Activated CD4-positive, alpha-beta T cell treated with anti-CD3 and anti-CD28 coated beads for 36 hours (primary cell): ENCODE measurements at regions of chr12 and their contacts with region 1.

Region 1: DNA sequence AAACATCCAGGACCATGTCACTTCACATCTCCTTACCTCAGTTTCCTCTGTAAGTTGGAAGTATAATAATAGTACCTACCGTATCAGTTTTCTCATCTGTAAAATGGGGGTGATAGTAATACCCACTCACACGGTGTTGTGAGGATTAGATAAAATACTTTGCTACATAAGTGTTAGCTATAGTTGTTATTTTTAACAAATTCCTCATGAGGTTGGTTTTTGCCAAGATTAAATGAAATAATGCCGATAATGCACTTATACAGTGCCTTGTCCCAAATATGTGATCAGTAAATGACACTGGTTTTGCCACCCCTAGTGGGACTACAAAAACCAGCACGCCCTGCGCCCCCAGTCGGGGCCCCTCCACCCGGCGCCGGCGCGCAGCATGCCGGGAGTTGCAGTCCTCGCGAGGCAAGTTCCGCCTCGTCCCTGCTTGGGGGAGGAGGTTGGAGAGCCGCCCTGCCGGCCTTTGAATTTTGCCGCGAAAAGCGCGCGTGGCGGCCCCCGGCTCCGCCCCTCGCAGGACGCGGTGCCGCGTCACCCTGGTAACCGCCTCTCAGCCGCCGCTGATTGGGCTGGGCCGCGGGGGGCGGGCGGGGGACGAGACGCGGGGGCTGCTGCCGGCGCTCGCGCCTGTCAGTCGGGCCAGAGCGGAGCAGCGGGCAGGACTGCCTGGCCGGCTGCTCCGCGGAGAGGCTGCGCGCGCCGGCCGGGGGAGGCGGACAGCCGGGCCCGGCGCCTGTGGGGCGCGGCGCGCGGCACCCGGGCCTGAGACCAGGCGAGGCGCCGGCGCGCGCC is at the start of gene FAM222A:
- DNase-seq: peak; percentile 97
- ATAC-seq: peak; percentile 95
- H3K4me3 Mint-ChIP-seq: peak within 1 kb of the TSS; percentile 56
- H3K27ac Mint-ChIP-seq: no peak within 1 kb of the TSS
- H3K4me1 Mint-ChIP-seq: peaks cover 4% of the 10 kb centered on the region
- H3K27me3 Mint-ChIP-seq: peaks cover 25% of the 10 kb centered on the region
- total RNA-seq, gene FAM222A: 0.39 to 0.53 TPM

Region 2: DNA sequence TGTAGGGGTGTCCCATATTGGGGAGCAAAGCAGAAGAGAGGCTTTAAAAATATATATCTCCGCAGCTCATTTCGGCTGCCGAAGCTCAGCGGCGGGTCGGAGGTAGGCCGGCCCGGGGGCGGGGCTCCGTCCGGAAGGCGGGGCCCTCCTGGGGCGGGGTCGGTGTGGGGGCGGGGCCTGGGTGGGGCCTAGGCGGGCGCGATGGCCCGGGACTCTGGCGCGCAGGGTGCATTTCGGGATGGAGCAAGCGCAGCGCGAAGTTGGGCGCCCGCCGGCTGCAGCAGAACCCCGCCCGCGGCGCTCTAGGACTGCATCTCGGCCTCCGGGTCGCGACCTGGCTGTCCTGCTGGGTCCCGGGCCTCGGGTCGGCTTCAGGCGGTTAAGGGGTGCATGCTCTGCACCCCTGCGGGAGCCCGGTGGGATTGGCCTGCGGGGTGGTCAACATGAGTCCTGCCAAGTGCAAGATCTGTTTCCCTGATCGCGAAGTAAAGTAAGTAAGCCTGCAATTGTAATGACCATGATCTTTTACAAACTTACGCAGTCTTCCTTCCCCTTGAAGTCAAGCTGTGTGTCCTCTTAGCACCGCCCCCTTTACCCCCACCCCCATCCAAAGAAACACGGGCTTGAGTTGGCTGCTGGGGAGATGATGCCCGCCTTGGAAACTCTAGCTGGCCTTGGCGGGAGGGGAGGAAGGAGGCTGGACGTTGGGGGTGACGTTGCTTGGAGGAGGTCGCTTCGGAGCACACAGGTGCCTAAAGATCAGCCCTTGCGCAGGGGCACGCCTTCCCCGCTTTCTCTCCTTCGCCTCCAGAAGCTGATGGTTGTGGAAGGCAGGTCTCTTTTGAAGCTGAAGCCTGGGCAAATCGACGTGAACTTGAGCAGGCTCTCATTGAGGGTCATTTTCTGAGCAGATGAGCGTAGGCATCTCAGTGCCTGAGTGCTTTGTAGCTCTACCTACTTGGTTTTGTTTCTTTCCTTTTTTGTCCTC is 558.6 kb before region 1 on chr12:
- CTCF ChIA-PET with region 1: no interaction called
- POLR2A ChIA-PET with region 1: no interaction called
- intact Hi-C with region 1: loop called in 1 of 2 experiments (anchors 1 kb)
- DNase-seq: peak; percentile 93
- ATAC-seq: peak; percentile 94
- H3K4me3 Mint-ChIP-seq: peak overlapping the region; percentile 82
- H3K27ac Mint-ChIP-seq: peak overlapping the region; percentile 85
- H3K4me1 Mint-ChIP-seq: peaks cover 17% of the 10 kb centered on the region
- H3K27me3 Mint-ChIP-seq: peaks cover 1% of the 10 kb centered on the region

Region 3: GRCh38 chr12:109518820-109519665 is 194.3 kb before region 1 on chr12:
- CTCF ChIA-PET with region 1: interaction called, 4 read pairs
- POLR2A ChIA-PET with region 1: no interaction called
- intact Hi-C with region 1: loop called in 1 of 2 experiments (anchors 1 kb)
- DNase-seq: peak; percentile 75
- ATAC-seq: peak; percentile 63
- H3K4me3 Mint-ChIP-seq: no peak overlapping the region
- H3K27ac Mint-ChIP-seq: no peak overlapping the region
- H3K4me1 Mint-ChIP-seq: no peaks in the 10 kb centered on the region
- H3K27me3 Mint-ChIP-seq: no peaks in the 10 kb centered on the region

Region 4: GRCh38 chr12:109844983-109845823 is 131.8 kb after region 1 on chr12:
- CTCF ChIA-PET with region 1: interaction called, 3 read pairs
- POLR2A ChIA-PET with region 1: no interaction called
- intact Hi-C with region 1: loop called in 1 of 2 experiments (anchors 1 kb)
- DNase-seq: peak; percentile 95
- ATAC-seq: peak; percentile 99
- H3K4me3 Mint-ChIP-seq: peak overlapping the region; percentile 21
- H3K27ac Mint-ChIP-seq: no peak overlapping the region
- H3K4me1 Mint-ChIP-seq: peaks cover 4% of the 10 kb centered on the region
- H3K27me3 Mint-ChIP-seq: no peaks in the 10 kb centered on the region

Region 5: GRCh38 chr12:110124184-110124995 is 411.0 kb after region 1 on chr12 and contains the start of gene IFT81:
- CTCF ChIA-PET with region 1: no interaction called
- POLR2A ChIA-PET with region 1: no interaction called
- intact Hi-C with region 1: loop called in 1 of 2 experiments (anchors 2 kb)
- DNase-seq: peak; percentile 98
- ATAC-seq: peak; percentile 91
- H3K4me3 Mint-ChIP-seq: peak within 1 kb of the TSS; percentile 83
- H3K27ac Mint-ChIP-seq: peak within 1 kb of the TSS; percentile 81
- H3K4me1 Mint-ChIP-seq: peaks cover 7% of the 10 kb centered on the region
- H3K27me3 Mint-ChIP-seq: peaks cover 4% of the 10 kb centered on the region
- total RNA-seq, gene IFT81: 3.5 TPM